ENCODE measurements at regions of chr4 and their contacts with region 1.

Region 1: DNA sequence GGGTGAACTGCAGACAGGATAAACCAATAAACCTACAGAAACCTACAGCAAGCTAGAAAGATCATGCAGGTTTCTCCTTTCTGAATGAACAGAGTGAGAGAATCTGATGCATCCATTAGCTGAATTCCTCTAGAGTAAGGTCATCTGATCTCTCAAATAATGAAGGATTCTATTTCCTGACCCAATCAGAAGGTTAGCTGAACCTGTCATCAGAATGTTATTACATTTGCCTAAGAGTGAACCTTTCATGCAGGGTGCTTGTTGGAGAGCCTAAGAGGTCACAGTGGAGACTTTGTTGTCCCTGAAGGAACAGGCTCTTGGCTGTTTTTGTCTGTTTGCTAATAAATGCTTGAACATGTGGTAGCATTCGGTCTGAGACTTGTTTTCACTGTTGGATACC is 24.0 kb downstream of the MEPE start:
- DNase-seq: no peak
- ATAC-seq: no peak
- H3K4me3 ChIP-seq: no peak overlapping the region
- H3K27ac ChIP-seq: no peak overlapping the region
- H3K4me1 ChIP-seq: no peaks in the 10 kb centered on the region
- H3K27me3 ChIP-seq: no peaks in the 10 kb centered on the region

Region 2: GRCh38 chr4:87973283-87974169 is 116.7 kb after region 1 on chr4:
- intact Hi-C with region 1: loop called (anchors 2 to 5 kb)
- DNase-seq: peak in 1 of 2 donors; percentile 65
- ATAC-seq: no peak
- H3K4me3 ChIP-seq: no peak overlapping the region
- H3K27ac ChIP-seq: no peak overlapping the region
- H3K4me1 ChIP-seq: no peaks in the 10 kb centered on the region
- H3K27me3 ChIP-seq: peaks cover 0 to 2% of the 10 kb centered on the region in 2 donors

Measured in aorta (tissue), 5 donors.